ENCODE measurements at regions of chr2 and their contacts with region 1.

Region 1: DNA sequence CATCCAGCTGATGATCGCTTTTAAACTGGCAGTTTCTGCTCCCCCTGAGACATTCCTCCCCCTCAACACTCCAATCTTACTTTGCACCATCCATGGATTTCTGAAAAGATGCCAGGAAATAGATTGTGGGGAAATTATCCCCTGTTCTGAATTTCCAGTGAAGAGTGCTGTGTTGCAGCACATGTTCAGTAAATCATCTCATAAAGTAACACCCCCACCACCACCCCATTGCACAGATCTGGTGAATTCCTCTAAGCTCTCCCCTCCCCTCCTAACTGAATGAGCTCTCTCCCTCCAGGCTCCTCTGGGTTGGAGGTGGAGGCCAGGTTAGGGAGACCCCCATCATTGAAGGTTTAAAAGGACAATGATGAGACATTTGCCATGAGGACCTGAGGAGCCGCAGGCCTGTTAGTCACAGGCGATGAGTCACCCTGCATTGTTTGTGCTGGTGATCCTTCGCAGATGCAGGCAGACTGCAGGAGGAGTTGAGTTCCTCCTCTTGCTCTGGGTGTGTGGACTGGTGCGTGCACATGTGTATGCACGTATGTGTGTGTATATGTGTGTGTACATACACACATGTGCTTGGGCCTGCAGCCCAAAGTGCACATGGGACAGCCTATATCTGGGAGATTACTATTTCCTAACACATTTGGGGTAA is 42.1 kb downstream of the MCFD2 start:
- DNase-seq: peak; percentile 87

Region 2: GRCh38 chr2:46812361-46813024 is 61.0 kb before region 1 on chr2:
- intact Hi-C with region 1: loop called (anchors 2 kb)
- DNase-seq: peak; percentile 78

Region 3: DNA sequence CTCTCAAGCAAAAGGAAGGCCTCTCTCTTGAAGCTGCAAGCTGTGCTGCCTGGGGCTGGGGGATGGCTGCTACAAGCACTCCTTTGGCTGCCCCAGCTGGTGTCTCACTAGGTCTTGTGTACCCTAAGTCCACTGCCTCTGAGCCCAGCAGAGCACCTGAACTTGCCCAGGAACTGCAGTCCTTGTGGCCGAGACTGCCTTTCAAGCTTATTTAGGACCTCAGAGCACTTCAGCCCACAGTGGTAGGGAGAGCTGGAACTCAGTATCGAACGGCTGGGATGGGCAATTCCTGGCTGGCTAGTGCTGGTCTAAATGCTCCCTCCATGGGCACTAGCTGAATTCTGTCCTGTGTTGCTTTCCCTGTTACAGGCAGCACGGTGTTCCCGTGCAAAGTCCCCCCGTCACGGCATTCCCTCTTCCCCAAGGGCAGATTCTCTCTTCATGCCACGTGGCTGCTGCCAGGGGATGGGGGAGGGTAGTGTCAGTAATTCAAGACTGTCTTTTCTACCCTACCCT is 255.7 kb after region 1 on chr2:
- intact Hi-C with region 1: no loop called
- DNase-seq: no peak